Left colon (tissue), 2 donors: ENCODE measurements at regions of chr2 and their contacts with region 1.

Region 1: GRCh38 chr2:130181325-130181879 is at the start of gene SMPD4:
- DNase-seq: peak; percentile 97 to 98
- ATAC-seq: peak; percentile 89
- total RNA-seq, gene SMPD4: 30.2 to 41.3 TPM

Region 2: GRCh38 chr2:130342533-130343275 is 161.3 kb after region 1 on chr2 and contains the start of gene IMP4:
- intact Hi-C with region 1: loop called in 1 of 2 experiments (anchors 10 kb)
- DNase-seq: peak; percentile 94 to 99
- ATAC-seq: peak; percentile 89
- total RNA-seq, gene IMP4: 60.7 to 74.8 TPM

Region 3: DNA sequence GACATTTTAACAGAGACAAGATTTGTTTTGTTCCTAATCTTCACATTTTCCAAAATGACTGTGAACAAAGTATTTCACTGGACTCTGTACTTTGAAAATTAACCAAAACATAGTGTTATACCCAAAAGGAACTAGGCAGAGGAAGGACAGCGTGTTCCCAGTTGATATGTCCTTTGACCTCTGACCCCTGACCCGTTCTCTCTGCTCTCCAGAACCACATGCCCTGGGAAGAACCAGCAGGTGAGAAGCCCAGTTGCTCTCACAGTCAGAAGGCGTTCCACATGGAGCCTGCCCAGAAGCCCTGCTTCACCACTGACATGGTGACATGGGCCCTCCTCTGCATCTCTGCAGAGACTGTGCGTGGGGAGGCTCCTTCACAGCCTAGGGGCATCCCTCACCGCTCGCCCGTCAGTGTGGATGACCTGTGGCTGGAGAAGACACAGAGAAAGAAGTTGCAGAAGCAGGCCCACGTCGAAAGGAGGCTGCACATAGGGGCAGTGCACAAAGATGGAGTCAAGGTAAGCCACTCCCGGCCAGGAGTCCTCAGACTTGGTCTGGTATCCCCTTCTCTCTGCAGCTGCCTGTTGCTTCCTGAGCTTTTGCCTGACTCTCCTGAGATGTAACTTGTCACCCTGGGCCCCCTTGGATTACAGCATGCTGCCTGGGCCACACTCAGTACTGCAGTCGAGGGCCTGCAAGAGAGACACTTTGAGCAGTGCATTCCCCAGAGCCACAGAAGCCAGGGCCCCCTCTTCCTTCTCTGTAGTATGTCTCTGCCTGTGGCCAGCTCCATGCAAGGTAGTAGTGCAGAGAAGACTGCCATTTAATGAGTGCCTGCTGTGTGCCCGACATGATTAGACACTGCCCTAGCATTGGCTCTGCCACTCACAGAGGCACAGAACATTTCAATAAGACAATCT is 749.6 kb after region 1 on chr2:
- intact Hi-C with region 1: no loop called
- DNase-seq: no peak
- ATAC-seq: no peak